ENCODE measurements at regions of chr20 and their contacts with region 1.

Region 1: GRCh38 chr20:47540443-47541354 is 39.0 kb downstream of the NCOA3 start:
- DNase-seq: peak in 1 of 2 experiments; percentile 62
- H3K4me3 ChIP-seq: no peak overlapping the region
- H3K27ac ChIP-seq: peak overlapping the region; percentile 52
- H3K4me1 ChIP-seq: peaks cover 45% of the 10 kb centered on the region
- H3K27me3 ChIP-seq: no peaks in the 10 kb centered on the region
- CTCF ChIP-seq: no peak

Region 2: DNA sequence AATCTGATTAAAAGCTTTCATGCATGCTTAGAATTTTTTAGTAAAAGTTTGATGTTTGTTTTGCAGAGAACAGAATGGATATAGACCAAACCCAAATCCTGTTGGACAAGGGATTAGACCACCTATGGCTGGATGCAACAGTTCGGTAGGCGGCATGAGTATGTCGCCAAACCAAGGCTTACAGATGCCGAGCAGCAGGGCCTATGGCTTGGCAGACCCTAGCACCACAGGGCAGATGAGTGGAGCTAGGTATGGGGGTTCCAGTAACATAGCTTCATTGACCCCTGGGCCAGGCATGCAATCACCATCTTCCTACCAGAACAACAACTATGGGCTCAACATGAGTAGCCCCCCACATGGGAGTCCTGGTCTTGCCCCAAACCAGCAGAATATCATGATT is 94.6 kb after region 1 on chr20:
- CTCF ChIA-PET with region 1: interaction called, 16 read pairs
- POLR2A ChIA-PET with region 1: no interaction called
- intact Hi-C with region 1: no loop called
- DNase-seq: no peak
- H3K4me3 ChIP-seq: no peak overlapping the region
- H3K27ac ChIP-seq: no peak overlapping the region
- H3K4me1 ChIP-seq: no peaks in the 10 kb centered on the region
- H3K27me3 ChIP-seq: no peaks in the 10 kb centered on the region
- CTCF ChIP-seq: no peak

Measured in PC-9 (cell line).